ENCODE measurements at regions of chr11 and their contacts with region 1.

Region 1: GRCh38 chr11:123511037-123511870 is 81.2 kb downstream of the GRAMD1B start:
- DNase-seq: peak; percentile 84 to 91 (median 89)
- H3K4me3 ChIP-seq: no peak overlapping the region
- H3K27ac ChIP-seq: no peak overlapping the region
- H3K4me1 ChIP-seq: no peaks in the 10 kb centered on the region
- H3K27me3 ChIP-seq: no peaks in the 10 kb centered on the region
- CTCF ChIP-seq: peak; percentile 77 to 89 (median 85)
- EP300 ChIP-seq: no peak
- POLR2A ChIP-seq: no peak

Region 2: GRCh38 chr11:123567466-123567865 is 56.2 kb after region 1 on chr11:
- intact Hi-C with region 1: no loop called
- DNase-seq: peak in 1 of 5 donors; percentile 36
- H3K4me3 ChIP-seq: no peak overlapping the region
- H3K27ac ChIP-seq: no peak overlapping the region
- H3K4me1 ChIP-seq: peaks cover 11% of the 10 kb centered on the region
- H3K27me3 ChIP-seq: no peaks in the 10 kb centered on the region
- CTCF ChIP-seq: no peak
- EP300 ChIP-seq: no peak
- POLR2A ChIP-seq: no peak

Region 3: DNA sequence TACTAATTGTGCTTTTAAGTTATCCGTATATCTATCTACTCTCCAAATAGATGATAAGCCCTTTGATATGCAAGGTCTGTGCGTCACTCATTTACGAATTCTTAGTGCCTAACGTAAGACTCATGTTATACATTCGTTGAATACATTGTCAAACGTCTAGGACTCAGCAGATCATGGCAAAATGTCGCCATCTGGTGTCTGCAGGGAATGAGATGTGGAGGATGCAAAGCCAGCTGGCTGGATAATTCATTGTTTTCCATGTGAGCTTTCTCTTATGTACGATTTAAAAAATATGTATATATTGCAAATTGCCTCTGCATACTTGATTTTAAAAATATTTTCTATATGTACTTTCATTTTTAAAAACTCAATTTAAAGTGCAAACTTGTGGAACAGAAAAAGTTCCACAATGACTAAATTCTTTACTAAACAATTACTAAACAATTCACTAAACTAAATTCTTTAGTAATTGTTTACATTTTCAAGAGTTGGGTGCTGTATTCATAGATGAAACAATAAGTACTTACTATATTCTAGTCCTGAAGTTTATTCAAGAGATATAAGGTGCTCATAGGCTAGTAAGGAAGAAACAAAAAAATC is 196.5 kb after region 1 on chr11:
- intact Hi-C with region 1: loop called in 2 of 4 experiments (anchors 5 to 10 kb)
- DNase-seq: peak; percentile 20 to 42 (median 32)
- H3K4me3 ChIP-seq: no peak overlapping the region
- H3K27ac ChIP-seq: no peak overlapping the region
- H3K4me1 ChIP-seq: peaks cover 2% of the 10 kb centered on the region
- H3K27me3 ChIP-seq: no peaks in the 10 kb centered on the region
- CTCF ChIP-seq: peak; percentile 29 to 59 (median 44)
- EP300 ChIP-seq: no peak
- POLR2A ChIP-seq: no peak